ENCODE measurements at regions of chr6 and their contacts with region 1.

Region 1: DNA sequence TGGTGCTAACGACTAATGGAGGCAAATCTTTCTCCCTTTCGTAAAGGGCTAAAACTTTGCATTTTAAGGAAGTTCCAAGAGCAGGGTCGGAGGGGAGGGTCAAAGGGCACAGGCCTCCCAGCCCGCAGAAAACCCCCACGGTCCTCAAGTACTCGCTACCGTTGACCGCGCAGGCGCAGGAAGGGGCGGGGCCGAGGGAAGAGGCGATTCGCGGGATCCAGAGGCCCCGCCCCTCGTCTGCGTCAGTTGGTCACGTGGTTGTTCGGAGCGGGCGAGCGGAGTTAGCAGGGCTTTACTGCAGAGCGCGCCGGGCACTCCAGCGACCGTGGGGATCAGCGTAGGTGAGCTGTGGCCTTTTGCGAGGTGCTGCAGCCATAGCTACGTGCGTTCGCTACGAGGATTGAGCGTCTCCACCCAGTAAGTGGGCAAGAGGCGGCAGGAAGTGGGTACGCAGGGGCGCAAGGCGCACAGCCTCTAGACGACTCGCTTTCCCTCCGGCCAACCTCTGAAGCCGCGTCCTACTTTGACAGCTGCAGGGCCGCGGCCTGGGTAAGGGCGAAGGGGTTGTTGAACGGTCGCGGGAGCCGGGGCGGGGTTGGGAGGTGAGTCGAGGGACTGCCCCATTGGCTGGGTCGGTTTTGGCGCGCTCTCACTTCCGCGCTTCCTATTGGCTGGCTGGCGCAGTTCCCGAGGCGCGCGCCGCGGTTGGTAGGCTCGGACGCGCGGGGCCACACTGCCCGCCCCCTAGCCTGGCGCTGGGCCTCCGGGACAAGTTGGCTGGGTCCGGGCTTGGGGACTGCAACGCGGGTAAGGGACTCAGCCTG is at the start of gene GMNN:
- DNase-seq: peak; percentile 95

Region 2: DNA sequence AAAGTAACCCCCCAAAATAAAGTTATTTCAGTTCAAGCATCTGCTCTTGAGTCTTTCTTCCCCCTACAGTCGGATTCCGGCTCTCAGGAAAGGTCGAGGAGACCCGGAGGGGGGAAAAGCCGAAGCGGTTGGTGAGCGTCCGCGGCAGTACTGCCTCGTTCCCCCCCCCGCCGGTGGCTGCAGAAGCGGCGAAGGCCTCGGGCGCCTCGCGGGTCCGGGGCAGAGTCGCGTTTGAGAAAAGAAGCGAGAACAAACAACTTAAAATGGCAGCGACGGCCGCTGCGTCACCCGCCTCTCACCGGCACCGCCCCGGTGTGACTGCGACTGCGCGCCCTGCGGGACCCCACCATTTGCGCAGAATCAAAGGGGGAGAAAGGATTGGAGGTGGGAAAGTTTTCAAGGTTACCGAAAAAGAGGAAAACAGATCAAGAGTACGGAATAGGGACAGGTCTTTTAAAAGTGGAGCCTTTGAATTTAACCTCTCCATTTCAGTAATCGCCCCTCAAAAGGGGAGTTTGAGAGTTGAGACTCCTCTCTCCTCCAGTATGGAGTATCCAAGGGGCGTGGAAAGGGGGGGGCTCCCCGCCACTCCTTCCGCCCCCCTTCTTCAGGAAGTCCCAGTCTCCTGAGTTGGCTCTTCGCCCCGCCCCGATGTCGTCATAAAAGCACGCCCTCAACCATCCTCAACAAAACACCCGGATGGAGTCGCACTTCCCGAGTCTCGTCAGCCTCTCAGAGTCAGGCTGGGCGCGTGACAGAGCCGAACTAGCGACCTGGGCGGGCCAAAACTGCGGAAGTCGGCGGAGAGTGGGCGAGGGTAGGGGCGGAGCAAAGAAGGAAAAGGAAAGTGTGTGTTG is 54.1 kb before region 1 on chr6:
- CTCF ChIA-PET with region 1: no interaction called
- POLR2A ChIA-PET with region 1: interaction called, 12 read pairs
- DNase-seq: peak; percentile 95

Region 3: DNA sequence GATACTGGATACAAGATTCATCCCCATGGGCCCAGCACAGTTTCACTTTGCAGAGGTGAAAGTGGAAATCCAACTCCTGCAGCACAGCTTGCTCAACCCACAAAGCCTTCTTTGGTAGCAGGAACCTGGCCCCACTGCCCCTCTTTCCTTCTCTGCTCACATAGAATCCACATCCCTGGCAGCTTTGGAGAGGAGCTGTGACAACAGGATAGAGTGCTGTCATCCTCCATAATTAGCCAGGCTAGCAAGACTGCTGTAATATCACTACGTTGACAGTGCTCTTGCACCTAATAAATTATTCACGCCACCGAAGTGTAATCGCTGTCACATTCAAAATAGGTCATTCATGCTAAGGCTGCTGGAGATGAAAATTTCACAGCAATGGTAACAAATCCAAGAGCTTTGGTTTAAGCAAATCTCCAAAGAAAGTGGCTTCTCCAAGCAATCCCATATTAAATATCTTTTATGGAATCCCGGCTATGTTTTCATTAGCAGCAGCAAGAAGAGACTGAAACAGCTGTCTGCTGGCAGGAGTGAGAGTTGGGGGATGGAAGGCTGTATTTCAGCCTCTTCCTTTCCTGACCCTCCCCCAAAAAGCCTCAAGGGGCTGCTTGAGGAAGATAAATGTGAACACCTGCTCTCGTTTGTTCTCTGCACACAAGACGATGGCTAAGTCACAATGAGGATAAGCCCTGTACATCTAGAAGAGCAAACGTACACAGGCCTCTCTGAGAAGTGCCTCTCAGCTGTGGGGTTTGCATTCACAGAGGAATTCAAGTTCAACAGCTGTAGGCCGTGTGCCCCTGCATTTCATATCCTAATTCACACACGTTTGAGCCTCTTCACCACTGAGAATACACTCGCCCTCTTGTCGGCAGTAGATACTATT is 144.3 kb after region 1 on chr6:
- CTCF ChIA-PET with region 1: no interaction called
- POLR2A ChIA-PET with region 1: no interaction called
- DNase-seq: no peak